Kidney (tissue), 22 donors: ENCODE measurements at regions of chr4 and their contacts with region 1.

Region 1: GRCh38 chr4:88366460-88366859 is 12.2 kb upstream of the HERC6 start:
- DNase-seq: no peak
- H3K4me3 ChIP-seq: no peak overlapping the region
- H3K27ac ChIP-seq: no peak overlapping the region
- H3K4me1 ChIP-seq: no peaks in the 10 kb centered on the region
- H3K27me3 ChIP-seq: no peaks in the 10 kb centered on the region
- CTCF ChIP-seq: no peak

Region 2: GRCh38 chr4:87856816-87857215 is 509.6 kb before region 1 on chr4:
- intact Hi-C with region 1: no loop called
- DNase-seq: no peak
- H3K4me3 ChIP-seq: no peak overlapping the region
- H3K27ac ChIP-seq: peak overlapping the region in 1 of 2 donors; percentile 42
- H3K4me1 ChIP-seq: peaks cover 0 to 16% (median 5%) of the 10 kb centered on the region in 3 donors
- H3K27me3 ChIP-seq: no peaks in the 10 kb centered on the region
- CTCF ChIP-seq: no peak

Region 3: DNA sequence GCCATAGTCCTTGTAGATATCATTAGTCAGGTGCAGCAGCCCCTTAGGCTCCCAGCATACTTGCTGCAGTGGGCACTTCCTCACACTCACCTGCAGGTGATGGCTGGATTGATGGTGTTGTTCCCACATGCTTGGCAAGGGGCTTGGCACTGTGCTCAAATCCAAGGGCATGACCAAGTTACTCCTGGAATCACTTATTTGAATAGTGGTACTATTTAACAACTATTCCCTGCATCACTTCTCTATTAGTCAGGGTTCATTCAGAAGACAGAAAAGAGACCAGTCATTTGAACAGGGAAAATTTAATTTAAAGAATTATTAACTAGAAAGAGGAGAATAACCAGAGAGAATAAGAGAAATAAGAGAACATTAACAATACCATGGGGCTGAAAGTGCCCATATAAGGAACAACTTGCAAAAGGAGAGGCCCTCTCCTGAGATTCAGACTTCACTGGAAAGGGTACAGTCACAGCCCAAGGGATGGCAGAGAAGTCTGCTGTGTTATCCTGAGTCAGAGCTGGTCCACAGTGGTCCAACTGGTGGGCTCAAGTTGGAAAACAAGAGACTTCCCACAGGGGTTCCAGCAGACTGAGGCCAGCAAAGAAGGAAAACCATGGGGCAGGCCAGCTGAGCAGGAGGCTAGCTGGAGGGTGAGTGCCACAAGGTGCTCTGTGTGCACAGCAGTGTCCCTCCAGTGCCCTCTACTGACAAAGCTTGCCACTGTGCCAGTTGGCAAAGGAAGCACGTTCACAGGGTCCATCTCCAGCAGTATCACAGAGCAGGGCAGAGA is 381.2 kb before region 1 on chr4:
- intact Hi-C with region 1: no loop called
- DNase-seq: peak; percentile 48 to 87 (median 60)
- H3K4me3 ChIP-seq: no peak overlapping the region
- H3K27ac ChIP-seq: peak overlapping the region in 1 of 2 donors; percentile 9
- H3K4me1 ChIP-seq: no peaks in the 10 kb centered on the region
- H3K27me3 ChIP-seq: no peaks in the 10 kb centered on the region
- CTCF ChIP-seq: peak; percentile 55

Region 4: GRCh38 chr4:88514557-88515511 is 148.4 kb after region 1 on chr4:
- intact Hi-C with region 1: loop called (anchors 10 kb)
- DNase-seq: no peak
- H3K4me3 ChIP-seq: no peak overlapping the region
- H3K27ac ChIP-seq: no peak overlapping the region
- H3K4me1 ChIP-seq: no peaks in the 10 kb centered on the region
- H3K27me3 ChIP-seq: no peaks in the 10 kb centered on the region
- CTCF ChIP-seq: no peak